Endothelial cell of umbilical vein (primary cell): ENCODE measurements at regions of chr11 and their contacts with region 1.

Region 1: GRCh38 chr11:77091146-77091940 is 11.3 kb upstream of the OMP start:
- DNase-seq: peak; percentile 73
- H3K4me3 ChIP-seq: no peak overlapping the region
- H3K27ac ChIP-seq: no peak overlapping the region
- H3K4me1 ChIP-seq: no peaks in the 10 kb centered on the region
- H3K27me3 ChIP-seq: no peaks in the 10 kb centered on the region
- CTCF ChIP-seq: peak; percentile 84 to 91
- POLR2A ChIP-seq: no peak

Region 2: GRCh38 chr11:77039491-77040400 is 51.6 kb before region 1 on chr11:
- CTCF ChIA-PET with region 1: interaction called, 27 read pairs
- POLR2A ChIA-PET with region 1: no interaction called
- dilution Hi-C with region 1: no loop called
- intact Hi-C with region 1: no loop called
- DNase-seq: peak; percentile 53
- H3K4me3 ChIP-seq: peak overlapping the region in 2 of 3 experiments; percentile 8 to 36
- H3K27ac ChIP-seq: no peak overlapping the region
- H3K4me1 ChIP-seq: peaks cover 2% of the 10 kb centered on the region
- H3K27me3 ChIP-seq: peaks cover 8 to 11% of the 10 kb centered on the region in 2 experiments
- CTCF ChIP-seq: peak; percentile 48 to 70
- POLR2A ChIP-seq: no peak

Region 3: GRCh38 chr11:77066229-77067042 is 24.9 kb before region 1 on chr11 and contains the start of gene CAPN5:
- CTCF ChIA-PET with region 1: interaction called, 148 read pairs
- POLR2A ChIA-PET with region 1: interaction called, 4 read pairs
- dilution Hi-C with region 1: no loop called
- intact Hi-C with region 1: loop called (anchors 1 kb)
- DNase-seq: peak; percentile 95
- H3K4me3 ChIP-seq: peak within 1 kb of the TSS; percentile 48 to 75 (median 62)
- H3K27ac ChIP-seq: no peak within 1 kb of the TSS
- H3K4me1 ChIP-seq: peaks cover 11% of the 10 kb centered on the region
- H3K27me3 ChIP-seq: no peaks in the 10 kb centered on the region
- CTCF ChIP-seq: peak; percentile 44 to 58
- POLR2A ChIP-seq: peak; percentile 98
- total RNA-seq, gene CAPN5: 14.3 and 15.0 TPM in 2 replicates

Region 4: DNA sequence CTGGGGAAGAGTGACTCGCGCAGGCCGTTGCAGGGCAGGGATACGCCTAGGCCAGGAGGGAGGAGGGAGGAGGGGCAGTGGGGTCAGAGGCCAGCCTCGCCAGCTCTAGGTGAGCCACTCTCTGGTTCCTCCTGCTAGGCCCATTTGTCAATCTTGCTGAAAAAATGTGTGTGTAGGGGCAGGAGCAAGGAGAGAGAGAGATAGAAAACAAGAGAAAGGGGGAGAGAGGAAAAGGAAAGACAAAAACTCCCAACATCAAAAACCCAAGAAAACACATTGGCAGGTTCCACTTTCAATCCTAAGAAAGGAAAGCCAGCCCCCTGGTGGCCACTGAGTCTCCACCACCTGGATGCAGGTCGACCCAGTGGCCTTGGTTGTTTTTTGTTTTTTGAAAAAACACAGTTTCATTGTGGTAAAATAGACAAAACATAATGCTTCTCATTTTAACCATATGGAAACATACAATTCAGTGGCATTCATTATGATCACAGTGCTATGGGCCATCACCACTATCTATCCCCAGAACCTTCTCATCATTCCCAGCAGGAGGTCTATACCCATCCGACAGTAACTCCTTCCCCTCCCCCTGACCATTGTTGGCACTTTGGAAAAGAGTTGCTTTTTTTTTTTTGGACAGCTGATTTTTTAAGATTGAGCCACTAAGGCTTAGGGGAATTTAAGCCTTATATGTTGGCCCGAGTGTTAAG is 22.2 kb after region 1 on chr11:
- CTCF ChIA-PET with region 1: interaction called, 89 read pairs
- POLR2A ChIA-PET with region 1: no interaction called
- dilution Hi-C with region 1: no loop called
- intact Hi-C with region 1: no loop called
- DNase-seq: peak; percentile 26
- H3K4me3 ChIP-seq: no peak overlapping the region
- H3K27ac ChIP-seq: no peak overlapping the region
- H3K4me1 ChIP-seq: peaks cover 5% of the 10 kb centered on the region
- H3K27me3 ChIP-seq: no peaks in the 10 kb centered on the region
- CTCF ChIP-seq: peak; percentile 52 to 76
- POLR2A ChIP-seq: no peak

Region 5: DNA sequence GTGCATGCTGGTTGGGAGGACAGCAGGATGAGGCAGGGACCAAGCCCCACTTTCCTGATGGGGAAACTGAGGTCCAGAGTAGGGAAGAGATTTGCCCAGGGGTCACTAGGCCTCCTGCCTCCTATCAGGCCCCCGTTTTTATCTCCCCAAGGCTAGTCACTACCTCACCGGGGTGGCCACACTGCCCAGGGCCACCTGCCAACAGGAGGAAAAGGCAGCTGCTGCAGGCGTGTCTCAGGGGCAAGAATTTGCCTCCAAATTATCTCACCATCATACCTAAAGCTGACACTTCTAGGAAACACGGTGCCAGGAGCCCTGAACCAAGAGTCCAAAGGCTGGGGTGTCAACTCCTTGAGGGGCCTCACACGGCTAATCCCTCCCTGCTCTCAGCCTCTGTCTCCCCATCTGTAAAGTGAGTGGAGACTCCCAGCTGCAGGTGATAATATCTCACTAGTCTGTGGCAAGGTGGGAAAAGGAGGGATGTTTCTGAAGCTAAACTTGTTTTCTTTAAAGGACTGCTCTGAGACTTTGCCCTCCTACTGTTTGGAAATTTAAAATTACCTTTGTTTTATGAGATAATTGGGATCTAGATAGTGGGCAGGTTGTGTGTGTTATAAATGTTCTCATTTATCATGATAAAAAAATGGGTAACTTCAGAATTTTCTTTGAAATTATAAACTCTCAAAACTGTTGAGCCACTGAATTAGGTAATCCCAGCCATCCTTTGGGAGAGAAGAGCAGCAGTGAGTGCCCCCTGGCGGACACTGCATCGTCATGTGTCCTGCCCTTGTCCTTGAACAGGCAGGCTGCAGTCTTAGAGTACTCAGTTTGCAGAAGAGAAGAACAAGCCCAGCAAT is 96.7 kb after region 1 on chr11:
- CTCF ChIA-PET with region 1: interaction called, 17 read pairs
- POLR2A ChIA-PET with region 1: no interaction called
- dilution Hi-C with region 1: no loop called
- intact Hi-C with region 1: no loop called
- DNase-seq: peak; percentile 75
- H3K4me3 ChIP-seq: no peak overlapping the region
- H3K27ac ChIP-seq: no peak overlapping the region
- H3K4me1 ChIP-seq: no peaks in the 10 kb centered on the region
- H3K27me3 ChIP-seq: no peaks in the 10 kb centered on the region
- CTCF ChIP-seq: peak; percentile 81 to 94
- POLR2A ChIP-seq: no peak